ENCODE measurements at regions of chr4 and their contacts with region 1.

Region 1: DNA sequence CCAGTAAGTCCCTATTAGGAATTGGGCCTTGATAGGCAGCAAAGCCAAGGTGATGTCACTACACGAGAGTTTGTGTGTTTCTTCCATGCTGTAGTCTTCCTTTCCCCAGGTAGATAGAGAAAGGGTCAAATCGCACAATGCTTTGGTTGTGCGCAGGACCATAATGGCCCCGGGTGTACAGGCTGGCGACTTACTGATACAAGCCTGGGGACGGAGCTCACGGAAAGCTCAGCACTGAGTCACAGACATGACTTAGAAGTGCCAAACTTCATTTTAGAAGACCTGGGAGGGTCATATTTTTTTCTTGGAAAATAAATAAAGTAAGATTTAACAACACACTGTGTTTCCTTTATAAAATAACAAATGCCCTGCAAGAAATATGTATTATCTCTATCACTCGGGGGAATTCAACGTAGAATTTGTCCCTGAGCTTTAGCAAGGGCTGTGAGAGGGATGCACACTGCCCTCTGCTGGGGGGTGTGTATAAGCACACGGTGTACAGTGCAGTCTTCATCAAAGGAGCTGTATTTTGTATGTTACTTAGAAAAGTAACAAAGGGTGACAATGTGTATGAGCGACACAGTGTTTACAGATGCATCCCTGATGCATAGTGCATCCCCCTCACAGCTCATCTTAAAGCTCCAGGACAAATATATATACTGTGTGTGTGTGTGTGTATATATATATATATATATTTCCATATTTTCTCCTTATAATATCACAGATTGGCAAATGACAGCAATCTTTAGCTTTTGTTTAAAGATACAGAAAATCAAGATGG is 254.5 kb upstream of the VEGFC start:
- DNase-seq: peak; percentile 71
- H3K4me3 Mint-ChIP-seq: no peak overlapping the region
- H3K27ac Mint-ChIP-seq: no peak overlapping the region
- H3K4me1 Mint-ChIP-seq: no peaks in the 10 kb centered on the region
- H3K27me3 Mint-ChIP-seq: peaks cover 7% of the 10 kb centered on the region

Region 2: DNA sequence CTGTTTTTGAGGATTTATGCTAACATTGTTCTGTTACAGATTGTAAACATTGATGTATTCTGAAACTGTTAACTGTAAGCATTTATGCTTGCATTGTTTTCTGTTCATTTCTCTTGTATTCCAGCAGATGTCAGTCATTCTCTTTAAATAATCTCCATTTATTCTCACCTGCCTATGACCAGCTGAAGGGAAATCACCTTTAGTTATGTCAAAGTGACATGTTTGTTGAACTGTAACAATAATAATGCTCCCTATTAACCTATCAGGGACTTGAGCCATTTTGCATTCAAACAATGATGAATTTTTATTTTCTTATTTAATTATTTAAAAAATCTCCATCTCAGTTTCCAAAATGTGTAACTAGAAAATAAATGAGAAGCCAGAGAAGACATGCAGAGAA is 669.5 kb before region 1 on chr4:
- CTCF ChIA-PET with region 1: interaction called, 16 read pairs
- DNase-seq: no peak
- H3K4me3 Mint-ChIP-seq: no peak overlapping the region
- H3K27ac Mint-ChIP-seq: no peak overlapping the region
- H3K4me1 Mint-ChIP-seq: no peaks in the 10 kb centered on the region
- H3K27me3 Mint-ChIP-seq: peaks cover 4% of the 10 kb centered on the region

Region 3: DNA sequence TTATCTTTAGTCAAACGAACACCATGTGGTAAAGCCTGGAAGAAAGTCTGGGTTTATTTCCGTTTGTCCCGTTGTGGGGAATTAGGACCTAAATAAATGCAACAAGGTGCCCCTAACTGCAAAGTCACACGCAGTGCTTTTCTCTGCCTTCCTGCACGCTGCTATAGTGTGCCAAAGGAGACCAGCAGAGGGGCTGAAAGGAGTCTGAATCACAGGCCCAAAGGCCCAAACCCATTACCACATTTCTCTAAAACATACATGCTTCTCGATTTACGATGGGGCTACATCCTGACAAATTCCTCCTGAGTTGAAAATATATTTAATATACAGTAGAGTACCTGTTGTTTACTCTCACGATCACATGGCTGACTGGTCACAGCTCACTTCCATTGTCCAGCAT is 259.0 kb before region 1 on chr4:
- CTCF ChIA-PET with region 1: interaction called, 10 read pairs
- DNase-seq: no peak
- H3K4me3 Mint-ChIP-seq: no peak overlapping the region
- H3K27ac Mint-ChIP-seq: no peak overlapping the region
- H3K4me1 Mint-ChIP-seq: peaks cover 4% of the 10 kb centered on the region
- H3K27me3 Mint-ChIP-seq: peaks cover 22% of the 10 kb centered on the region

Measured in activated naive CD4-positive, alpha-beta T cell treated with anti-CD3 and anti-CD28 coated beads, Interleukin-2, amount 10 ng/mL, durations not matched to agents 7 days and 5 days (primary cell).